Naive thymus-derived CD8-positive, alpha-beta T cell (primary cell): ENCODE measurements at regions of chr1 and their contacts with region 1.

Region 1: GRCh38 chr1:229558571-229559335 is at the start of gene ABCB10:
- DNase-seq: peak; percentile 61 to 87 (median 80)
- ATAC-seq: peak; percentile 81 to 83
- H3K4me3 Mint-ChIP-seq: peak within 1 kb of the TSS; percentile 91 to 99 (median 96)
- H3K27ac Mint-ChIP-seq: peak within 1 kb of the TSS; percentile 63 to 95 (median 90)
- H3K4me1 Mint-ChIP-seq: peaks cover 21 to 44% (median 40%) of the 10 kb centered on the region in 4 donors
- H3K27me3 Mint-ChIP-seq: no peaks in the 10 kb centered on the region
- polyA plus RNA-seq, gene ABCB10: 5.1 to 12.8 (median 8.9) TPM

Region 2: DNA sequence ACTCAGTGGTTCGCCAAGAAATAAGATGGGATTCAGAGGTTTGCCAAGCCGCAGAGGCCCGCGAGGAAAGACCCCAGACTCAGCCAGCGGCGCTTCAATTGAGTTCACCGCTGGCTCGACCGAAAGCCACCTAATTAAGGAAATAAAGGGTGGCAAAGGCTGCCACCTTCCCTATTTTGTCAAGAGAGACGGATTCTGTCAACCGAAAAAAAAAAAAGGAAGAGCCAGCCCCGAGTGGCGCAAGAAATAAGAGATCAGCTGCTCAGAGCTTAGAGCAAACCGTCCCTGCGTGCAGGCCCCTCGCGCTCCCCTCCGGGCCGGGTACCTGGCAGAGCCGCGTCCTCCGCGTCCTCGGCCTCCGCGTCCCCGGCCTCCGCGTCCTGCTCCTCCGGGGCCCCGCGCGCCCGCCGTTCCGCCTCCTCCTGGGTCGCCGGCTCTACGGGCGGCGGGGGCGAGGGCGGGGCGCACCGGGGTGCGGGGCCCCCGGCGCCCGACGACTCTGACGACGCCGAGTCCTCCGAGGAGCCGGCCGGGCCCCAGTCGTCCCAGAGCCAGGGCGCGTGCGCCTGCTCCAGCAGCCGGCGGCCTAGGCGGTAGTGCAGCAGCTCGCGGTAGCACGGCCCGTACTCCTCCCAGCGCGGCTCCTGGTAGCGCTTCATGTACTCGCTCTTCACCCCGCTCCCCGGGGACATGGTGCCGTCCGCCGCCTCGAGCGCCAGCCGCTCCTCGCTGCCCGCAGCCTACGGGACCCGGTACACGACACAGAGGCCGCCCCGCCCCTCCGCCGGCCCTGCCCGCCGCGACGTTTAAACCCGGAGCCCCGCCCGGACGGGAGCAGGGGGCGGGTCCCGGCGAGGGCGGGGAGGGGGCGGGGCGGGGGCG is 216.7 kb before region 1 on chr1:
- POLR2A ChIA-PET with region 1: interaction called, 10 read pairs
- DNase-seq: peak in 9 of 10 donors; percentile 9 to 87 (median 80)
- ATAC-seq: peak; percentile 71 to 72
- H3K4me3 Mint-ChIP-seq: peak overlapping the region; percentile 89 to 96 (median 93)
- H3K27ac Mint-ChIP-seq: peak overlapping the region; percentile 80 to 97 (median 90)
- H3K4me1 Mint-ChIP-seq: peaks cover 23 to 50% (median 40%) of the 10 kb centered on the region in 4 donors
- H3K27me3 Mint-ChIP-seq: peaks cover 0 to 3% (median 0%) of the 10 kb centered on the region in 5 donors

Region 3: GRCh38 chr1:229507951-229508822 is 50.6 kb before region 1 on chr1 and contains the start of gene NUP133:
- POLR2A ChIA-PET with region 1: interaction called, 10 read pairs
- DNase-seq: peak; percentile 95 to 99 (median 97)
- ATAC-seq: peak; percentile 97
- H3K4me3 Mint-ChIP-seq: peak within 1 kb of the TSS; percentile 87 to 95 (median 93)
- H3K27ac Mint-ChIP-seq: peak within 1 kb of the TSS; percentile 96 to 100 (median 98)
- H3K4me1 Mint-ChIP-seq: peaks cover 10 to 42% (median 26%) of the 10 kb centered on the region in 4 donors
- H3K27me3 Mint-ChIP-seq: peaks cover 0 to 2% (median 0%) of the 10 kb centered on the region in 5 donors
- polyA plus RNA-seq, gene NUP133: 14.5 to 17.7 (median 15.5) TPM

Region 4: GRCh38 chr1:229625915-229626831 is 67.4 kb after region 1 on chr1 and contains the starts of genes TAF5L and URB2:
- POLR2A ChIA-PET with region 1: interaction called, 74 read pairs
- DNase-seq: peak; percentile 77 to 89 (median 82)
- ATAC-seq: peak; percentile 89 to 90
- H3K4me3 Mint-ChIP-seq: peak within 1 kb of the TSS; percentile 98 to 100 (median 99)
- H3K27ac Mint-ChIP-seq: peak within 1 kb of the TSS; percentile 85 to 98 (median 96)
- H3K4me1 Mint-ChIP-seq: peaks cover 28 to 65% (median 63%) of the 10 kb centered on the region in 4 donors
- H3K27me3 Mint-ChIP-seq: no peaks in the 10 kb centered on the region
- polyA plus RNA-seq, gene TAF5L: 4.1 to 4.2 (median 4.2) TPM
- polyA plus RNA-seq, gene URB2: 5.7 to 8.5 (median 7.1) TPM